Activated naive CD4-positive, alpha-beta T cell treated with anti-CD3 and anti-CD28 coated beads for 36 hours (primary cell): ENCODE measurements at regions of chr22 and their contacts with region 1.

Region 1: GRCh38 chr22:21735200-21736076 is at the start of gene YPEL1:
- DNase-seq: peak; percentile 91
- H3K4me3 Mint-ChIP-seq: peak within 1 kb of the TSS; percentile 82
- H3K27ac Mint-ChIP-seq: no peak within 1 kb of the TSS
- H3K4me1 Mint-ChIP-seq: peaks cover 12% of the 10 kb centered on the region
- H3K27me3 Mint-ChIP-seq: peaks cover 3% of the 10 kb centered on the region
- total RNA-seq, gene YPEL1: 0.88 to 1.6 TPM

Region 2: DNA sequence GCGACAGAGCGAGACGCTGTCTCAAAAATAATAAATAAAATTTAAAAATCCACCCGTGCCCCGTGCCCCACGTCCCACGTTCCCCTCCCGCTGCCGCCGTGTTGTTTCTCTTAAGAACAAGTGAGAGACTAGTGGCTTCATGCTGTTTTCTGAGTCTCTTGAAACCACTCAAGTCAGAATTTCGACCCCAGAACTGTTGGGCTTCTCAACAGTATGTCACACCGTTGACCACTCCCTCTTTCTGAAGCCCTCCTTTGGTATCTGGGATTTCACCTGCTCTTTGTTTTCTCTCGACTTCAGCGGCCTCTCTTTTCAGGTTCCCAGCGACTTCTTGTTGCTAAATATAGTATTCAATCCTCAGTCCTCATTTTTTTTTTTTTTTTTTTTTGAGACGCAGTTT is 68.7 kb before region 1 on chr22:
- CTCF ChIA-PET with region 1: interaction called, 3 read pairs
- intact Hi-C with region 1: loop called (anchors 5 kb)
- DNase-seq: no peak
- H3K4me3 Mint-ChIP-seq: peak overlapping the region; percentile 100
- H3K27ac Mint-ChIP-seq: peak overlapping the region; percentile 95
- H3K4me1 Mint-ChIP-seq: peaks cover 28% of the 10 kb centered on the region
- H3K27me3 Mint-ChIP-seq: no peaks in the 10 kb centered on the region

Region 3: GRCh38 chr22:21791635-21792625 is 56.5 kb after region 1 on chr22:
- CTCF ChIA-PET with region 1: no interaction called
- intact Hi-C with region 1: loop called (anchors 2 kb)
- DNase-seq: peak; percentile 36
- H3K4me3 Mint-ChIP-seq: no peak overlapping the region
- H3K27ac Mint-ChIP-seq: no peak overlapping the region
- H3K4me1 Mint-ChIP-seq: peaks cover 16% of the 10 kb centered on the region
- H3K27me3 Mint-ChIP-seq: no peaks in the 10 kb centered on the region